Left cardiac atrium (tissue), 4 donors: ENCODE measurements at regions of chr7 and their contacts with region 1.

Region 1: DNA sequence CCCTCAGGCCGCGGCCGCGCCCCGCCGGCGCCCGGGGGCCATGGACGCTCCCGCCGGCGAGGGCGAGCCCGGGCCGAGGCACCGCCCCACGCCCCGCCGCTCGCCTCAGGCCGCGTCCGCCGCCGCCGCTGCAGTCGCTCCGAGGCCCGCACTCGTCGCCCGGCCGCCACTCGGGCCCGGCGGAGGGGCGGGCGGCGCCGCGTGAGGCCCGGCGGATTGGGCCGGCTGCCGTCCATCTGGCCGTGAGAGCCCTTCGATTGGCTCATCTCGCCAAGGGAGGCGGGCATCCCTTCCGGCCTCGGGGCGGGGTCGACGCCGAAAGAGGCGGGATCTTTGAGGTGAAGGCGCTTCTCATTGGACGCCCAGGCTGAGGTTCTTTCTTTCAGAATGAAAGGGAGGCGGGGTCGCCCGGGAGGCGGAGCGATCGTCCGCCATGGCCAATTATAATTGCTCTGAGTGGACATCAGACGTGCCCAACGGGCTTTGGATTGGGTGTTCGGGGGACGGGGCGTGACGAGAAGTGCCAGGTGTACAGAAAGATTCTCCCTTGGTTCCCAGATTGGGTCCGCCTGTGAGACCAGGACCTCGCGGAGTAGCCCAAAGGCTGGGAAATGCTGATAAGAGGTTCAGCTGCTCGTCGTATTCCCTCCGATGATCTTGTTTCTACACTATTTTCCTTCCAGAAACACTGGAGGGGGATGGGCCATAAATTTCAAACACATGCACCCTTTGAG is at the start of gene GNA12:
- DNase-seq: peak; percentile 99
- ATAC-seq: peak; percentile 99
- total RNA-seq, gene GNA12: 47.4 to 52.2 TPM

Region 2: DNA sequence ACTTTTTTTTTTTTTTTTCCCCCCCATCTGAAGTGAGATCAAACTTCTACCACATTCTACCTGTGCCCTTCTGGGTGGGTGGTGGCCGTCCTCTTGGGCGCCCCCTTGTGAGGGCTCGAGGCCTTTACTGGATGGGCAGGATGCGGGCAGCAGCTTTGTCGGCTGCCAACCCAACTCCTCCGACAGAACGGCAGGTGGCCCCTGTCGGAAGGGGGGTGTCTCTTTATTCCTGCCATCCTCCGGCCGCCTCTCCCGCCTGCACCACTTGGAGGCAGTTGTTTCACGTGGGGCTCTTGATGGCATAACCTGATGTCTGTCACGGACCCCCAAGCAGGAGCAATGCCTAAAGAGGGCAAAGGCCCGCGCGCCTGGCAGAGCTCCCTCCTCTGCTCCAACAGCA is 125.3 kb before region 1 on chr7:
- intact Hi-C with region 1: loop called in 1 of 2 experiments (anchors 5 kb)
- DNase-seq: no peak
- ATAC-seq: peak in 1 of 2 donors; percentile 11